Common myeloid progenitor, CD34-positive (primary cell): ENCODE measurements at regions of chr2 and their contacts with region 1.

Region 1: GRCh38 chr2:105278654-105279053 is 37.1 kb downstream of the GPR45 start:
- DNase-seq: no peak
- H3K4me3 ChIP-seq: no peak overlapping the region
- H3K27ac ChIP-seq: no peak overlapping the region
- H3K4me1 ChIP-seq: no peaks in the 10 kb centered on the region
- H3K27me3 ChIP-seq: no peaks in the 10 kb centered on the region

Region 2: GRCh38 chr2:105261061-105261460 is 17.6 kb before region 1 on chr2:
- CTCF ChIA-PET with region 1: interaction called, 10 read pairs
- POLR2A ChIA-PET with region 1: no interaction called
- DNase-seq: no peak
- H3K4me3 ChIP-seq: no peak overlapping the region
- H3K27ac ChIP-seq: no peak overlapping the region
- H3K4me1 ChIP-seq: no peaks in the 10 kb centered on the region
- H3K27me3 ChIP-seq: no peaks in the 10 kb centered on the region